Mucosa of descending colon (tissue), 3 donors: ENCODE measurements at regions of chr2 and their contacts with region 1.

Region 1: GRCh38 chr2:227661019-227661649 is 5.5 kb upstream of the SCYGR5 start:
- DNase-seq: no peak
- ATAC-seq: no peak
- H3K4me3 ChIP-seq: no peak overlapping the region
- H3K4me1 ChIP-seq: no peaks in the 10 kb centered on the region
- CTCF ChIP-seq: no peak

Region 2: DNA sequence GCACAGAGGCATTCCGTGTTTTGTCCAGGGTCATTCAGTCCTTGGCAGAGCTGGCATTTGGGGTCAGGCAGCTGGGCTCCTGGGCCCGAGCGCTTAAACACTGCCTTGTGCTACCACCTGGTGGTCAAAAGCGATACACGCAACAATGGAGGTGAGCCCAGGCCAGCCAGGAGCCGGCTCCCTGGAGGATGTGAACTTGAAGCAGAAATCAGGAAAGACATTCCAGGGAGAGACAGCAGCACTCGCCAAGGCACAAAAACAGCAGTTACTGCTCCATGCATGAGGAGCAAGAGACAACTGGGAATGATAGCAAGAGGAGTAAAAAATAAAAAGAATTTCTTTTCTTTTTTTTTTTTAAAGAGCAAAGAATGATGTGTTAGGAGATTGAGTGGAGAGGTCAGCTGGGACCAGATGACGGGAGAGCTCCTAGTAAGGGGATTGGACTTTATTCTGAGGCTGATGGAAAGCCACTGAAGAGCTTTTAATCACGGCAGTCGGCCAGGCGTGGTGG is 105.3 kb after region 1 on chr2:
- intact Hi-C with region 1: loop called (anchors 5 kb)
- DNase-seq: peak; percentile 74 to 90 (median 84)
- ATAC-seq: peak; percentile 80
- H3K4me3 ChIP-seq: no peak overlapping the region
- H3K4me1 ChIP-seq: peaks cover 15% of the 10 kb centered on the region
- CTCF ChIP-seq: peak; percentile 63

Region 3: GRCh38 chr2:227884511-227884947 is 223.4 kb after region 1 on chr2:
- intact Hi-C with region 1: loop called in 1 of 2 experiments (anchors 10 kb)
- DNase-seq: peak; percentile 76 to 92 (median 89)
- ATAC-seq: peak; percentile 98
- H3K4me3 ChIP-seq: no peak overlapping the region
- H3K4me1 ChIP-seq: peaks cover 10% of the 10 kb centered on the region
- CTCF ChIP-seq: peak; percentile 71